T-cell (primary cell): ENCODE measurements at regions of chr22 and their contacts with region 1.

Region 1: GRCh38 chr22:36026741-36027140 is 1.9 kb downstream of the RBFOX2 start:
- DNase-seq: peak in 1 of 35 experiments; percentile 9
- ATAC-seq: no peak
- H3K4me3 ChIP-seq: no peak overlapping the region
- H3K4me3 Mint-ChIP-seq: peak overlapping the region; percentile 18 to 90 (median 79)
- H3K27ac ChIP-seq: no peak overlapping the region
- H3K27ac Mint-ChIP-seq: peak overlapping the region; percentile 2 to 45
- H3K4me1 ChIP-seq: peaks cover 5 to 15% of the 10 kb centered on the region in 2 experiments
- H3K4me1 Mint-ChIP-seq: peaks cover 28 to 34% (median 34%) of the 10 kb centered on the region in 3 donors
- H3K27me3 ChIP-seq: peaks cover 0 to 15% of the 10 kb centered on the region in 2 experiments
- H3K27me3 Mint-ChIP-seq: peaks cover 0 to 18% of the 10 kb centered on the region in 2 donors

Region 2: DNA sequence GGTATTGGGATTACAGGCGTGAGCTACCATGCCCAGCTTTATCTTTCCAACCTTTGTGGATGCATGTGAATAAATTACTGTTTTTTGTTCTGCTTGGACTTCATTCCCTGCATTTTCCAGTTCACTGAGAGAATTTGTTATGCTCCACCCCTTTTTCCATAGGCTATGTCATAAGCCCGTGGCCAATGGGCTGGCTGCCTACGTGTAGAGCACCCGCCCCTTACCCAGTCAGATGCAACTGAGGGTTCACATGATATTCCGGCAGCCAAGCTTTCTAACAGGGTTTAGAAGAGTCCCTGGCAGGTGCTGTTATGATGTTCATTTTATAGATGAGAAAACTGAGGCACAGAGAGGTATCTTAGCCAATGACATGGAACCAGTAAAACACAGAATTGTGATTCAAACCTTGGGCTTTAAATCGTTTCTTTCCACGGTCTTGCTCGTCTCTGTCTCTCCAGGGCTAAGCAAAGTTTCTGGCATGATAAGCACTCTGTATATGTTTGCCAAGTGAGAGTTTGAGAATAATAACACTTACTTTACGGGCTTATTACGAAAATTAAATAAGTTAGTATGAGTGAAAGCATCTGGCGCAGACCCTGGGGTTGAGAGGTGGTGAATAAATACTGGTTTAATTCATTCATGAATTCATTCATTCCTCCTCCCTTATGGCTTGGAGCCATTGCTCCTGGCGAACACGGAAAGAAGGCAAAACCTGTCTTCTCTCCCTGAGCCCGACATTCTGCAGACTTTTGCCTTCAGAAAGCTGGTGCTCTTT is 528.5 kb before region 1 on chr22:
- CTCF ChIA-PET with region 1: no interaction called
- POLR2A ChIA-PET with region 1: no interaction called
- DNase-seq: no peak
- ATAC-seq: no peak
- H3K4me3 ChIP-seq: no peak overlapping the region
- H3K4me3 Mint-ChIP-seq: no peak overlapping the region
- H3K27ac ChIP-seq: no peak overlapping the region
- H3K27ac Mint-ChIP-seq: no peak overlapping the region
- H3K4me1 ChIP-seq: no peaks in the 10 kb centered on the region
- H3K4me1 Mint-ChIP-seq: no peaks in the 10 kb centered on the region
- H3K27me3 ChIP-seq: peaks cover 0 to 29% of the 10 kb centered on the region in 2 experiments
- H3K27me3 Mint-ChIP-seq: peaks cover 38 to 50% of the 10 kb centered on the region in 2 donors

Region 3: DNA sequence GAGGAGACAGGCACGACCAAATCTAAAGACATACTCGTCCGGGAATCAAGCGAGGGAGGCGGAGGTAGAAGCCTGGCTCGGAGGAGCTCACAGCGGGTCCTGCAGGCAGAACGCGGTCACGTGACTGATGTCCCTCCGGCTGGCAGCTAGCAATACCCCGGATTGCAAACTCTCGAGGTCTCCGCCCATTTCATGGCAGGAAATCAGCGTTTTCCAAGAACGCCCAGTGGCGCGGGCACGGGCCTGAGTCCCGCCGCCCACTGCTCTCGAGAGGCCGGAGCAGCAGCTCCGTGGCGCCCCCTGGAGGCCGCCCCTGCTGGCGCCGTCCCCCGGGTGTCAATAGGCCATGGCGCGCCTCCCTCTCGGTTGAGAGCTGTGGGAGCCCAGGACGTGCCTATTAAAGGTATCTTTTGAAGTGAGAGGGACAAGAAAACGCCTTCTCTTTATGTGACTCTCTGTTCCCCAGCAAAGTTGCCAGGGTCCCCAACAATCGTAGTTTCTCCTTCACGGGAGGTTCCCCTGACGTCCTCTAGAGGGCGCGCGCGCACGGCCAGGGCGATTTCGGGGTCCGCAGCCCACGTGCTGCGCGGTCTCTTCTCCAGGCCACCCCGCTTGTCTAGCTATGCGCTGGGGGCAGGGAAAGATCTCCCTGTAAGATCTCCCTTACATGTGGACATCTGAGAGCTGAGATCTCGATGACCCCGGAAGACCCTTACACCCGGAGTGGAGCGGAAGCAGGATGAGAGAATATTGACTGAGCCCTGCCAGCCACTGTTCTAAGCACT is 39.2 kb after region 1 on chr22:
- CTCF ChIA-PET with region 1: interaction called in 1 of 2 experiments, 4 read pairs
- POLR2A ChIA-PET with region 1: interaction called in 1 of 2 experiments, 13 read pairs
- DNase-seq: peak in 34 of 35 experiments; percentile 16 to 76 (median 50)
- ATAC-seq: peak; percentile 76 to 83 (median 80)
- H3K4me3 ChIP-seq: peak overlapping the region; percentile 50 to 59
- H3K4me3 Mint-ChIP-seq: peak overlapping the region; percentile 74 to 79 (median 78)
- H3K27ac ChIP-seq: no peak overlapping the region
- H3K27ac Mint-ChIP-seq: peak overlapping the region in 1 of 2 donors; percentile 28
- H3K4me1 ChIP-seq: peaks cover 0 to 15% of the 10 kb centered on the region in 2 experiments
- H3K4me1 Mint-ChIP-seq: peaks cover 9 to 12% (median 11%) of the 10 kb centered on the region in 3 donors
- H3K27me3 ChIP-seq: peaks cover 0 to 7% of the 10 kb centered on the region in 2 experiments
- H3K27me3 Mint-ChIP-seq: peaks cover 0 to 3% of the 10 kb centered on the region in 2 donors

Region 4: GRCh38 chr22:37940698-37941376 is 1914.1 kb after region 1 on chr22:
- CTCF ChIA-PET with region 1: no interaction called
- POLR2A ChIA-PET with region 1: interaction called in 1 of 2 experiments, 10 read pairs
- DNase-seq: no peak
- ATAC-seq: no peak
- H3K4me3 ChIP-seq: no peak overlapping the region
- H3K4me3 Mint-ChIP-seq: no peak overlapping the region
- H3K27ac ChIP-seq: no peak overlapping the region
- H3K27ac Mint-ChIP-seq: no peak overlapping the region
- H3K4me1 ChIP-seq: no peaks in the 10 kb centered on the region
- H3K4me1 Mint-ChIP-seq: no peaks in the 10 kb centered on the region
- H3K27me3 ChIP-seq: no peaks in the 10 kb centered on the region
- H3K27me3 Mint-ChIP-seq: no peaks in the 10 kb centered on the region